Endothelial cell of umbilical vein (primary cell): ENCODE measurements at regions of chr1 and their contacts with region 1.

Region 1: GRCh38 chr1:32107742-32108661 is at the start of gene KPNA6:
- DNase-seq: peak; percentile 97
- H3K4me3 ChIP-seq: peak within 1 kb of the TSS; percentile 72 to 86 (median 81)
- H3K27ac ChIP-seq: peak within 1 kb of the TSS; percentile 66
- H3K4me1 ChIP-seq: peaks cover 4% of the 10 kb centered on the region
- H3K27me3 ChIP-seq: no peaks in the 10 kb centered on the region
- CTCF ChIP-seq: no peak
- POLR2A ChIP-seq: peak; percentile 52
- total RNA-seq, gene KPNA6: 83.4 and 85.6 TPM in 2 replicates

Region 2: DNA sequence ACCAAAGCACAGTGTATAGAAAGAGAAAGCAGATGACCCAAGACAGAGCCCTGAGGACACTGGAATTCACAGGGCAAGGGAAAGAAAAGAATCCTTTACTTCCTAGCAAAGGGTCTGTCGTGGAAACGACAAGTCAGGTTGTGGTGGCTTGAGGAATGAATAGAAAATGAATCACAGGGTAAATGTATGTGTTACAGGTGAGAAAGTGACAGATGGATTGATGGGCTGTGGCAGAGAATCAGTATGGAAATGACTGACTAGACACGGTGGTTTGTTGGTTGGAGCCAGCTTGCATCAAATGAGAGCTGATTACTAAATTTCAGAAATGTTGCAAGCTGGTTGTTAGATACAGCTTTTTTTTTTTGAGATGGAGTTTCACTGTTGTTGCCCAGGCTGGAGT is 216.7 kb before region 1 on chr1:
- CTCF ChIA-PET with region 1: no interaction called
- POLR2A ChIA-PET with region 1: no interaction called
- dilution Hi-C with region 1: no loop called
- intact Hi-C with region 1: no loop called
- DNase-seq: no peak
- H3K4me3 ChIP-seq: no peak overlapping the region
- H3K27ac ChIP-seq: no peak overlapping the region
- H3K4me1 ChIP-seq: peaks cover 9% of the 10 kb centered on the region
- H3K27me3 ChIP-seq: no peaks in the 10 kb centered on the region
- CTCF ChIP-seq: no peak
- POLR2A ChIP-seq: no peak

Region 3: GRCh38 chr1:32072622-32073298 is 35.2 kb before region 1 on chr1 and contains the start of gene TMEM39B:
- CTCF ChIA-PET with region 1: interaction called, 55 read pairs
- POLR2A ChIA-PET with region 1: interaction called, 7 read pairs
- dilution Hi-C with region 1: no loop called
- intact Hi-C with region 1: loop called (anchors 1 kb)
- DNase-seq: peak; percentile 94
- H3K4me3 ChIP-seq: peak within 1 kb of the TSS; percentile 74 to 78 (median 77)
- H3K27ac ChIP-seq: peak within 1 kb of the TSS; percentile 93
- H3K4me1 ChIP-seq: peaks cover 43% of the 10 kb centered on the region
- H3K27me3 ChIP-seq: no peaks in the 10 kb centered on the region
- CTCF ChIP-seq: no peak
- POLR2A ChIP-seq: peak; percentile 76
- total RNA-seq, gene TMEM39B: 43.7 and 47.3 TPM in 2 replicates

Region 4: DNA sequence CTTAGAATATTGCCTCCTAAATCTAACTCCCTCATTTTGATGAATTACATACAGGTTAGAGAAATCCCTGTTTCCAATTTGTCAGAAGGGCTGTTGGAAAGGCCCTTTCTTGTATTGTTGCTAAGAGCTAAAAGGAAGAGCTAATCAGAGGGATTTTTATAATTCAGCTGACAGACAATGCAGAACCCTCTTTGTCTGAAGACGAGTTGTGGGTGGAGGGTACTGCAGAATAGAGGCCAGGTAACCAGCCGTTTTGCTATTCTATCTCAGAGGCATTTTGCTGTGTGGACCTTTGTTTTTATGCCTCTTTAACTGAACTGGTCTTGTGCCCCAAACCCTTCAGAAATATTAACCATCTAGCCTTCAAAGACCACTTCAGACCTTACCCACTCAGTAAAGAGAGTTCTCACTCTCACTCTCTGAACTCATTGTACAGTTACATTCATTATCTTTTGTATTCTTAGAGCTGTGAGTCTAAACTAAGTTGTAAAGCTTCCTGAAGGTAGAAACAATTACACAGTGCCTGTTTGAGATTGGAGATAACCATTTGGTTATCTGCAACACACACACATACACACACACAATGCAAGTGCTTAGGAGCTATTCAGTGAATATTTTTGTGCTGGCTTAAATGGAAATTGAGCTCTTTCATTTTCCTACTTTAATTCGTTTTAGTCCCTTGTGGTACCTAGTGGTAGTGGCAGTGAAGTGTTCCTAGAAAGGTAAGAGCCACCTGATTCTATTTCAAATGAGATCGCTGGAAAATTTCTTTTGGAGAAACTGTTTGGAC is 19.6 kb after region 1 on chr1:
- CTCF ChIA-PET with region 1: interaction called, 13 read pairs
- POLR2A ChIA-PET with region 1: no interaction called
- dilution Hi-C with region 1: no loop called
- intact Hi-C with region 1: no loop called
- DNase-seq: peak; percentile 31
- H3K4me3 ChIP-seq: no peak overlapping the region
- H3K27ac ChIP-seq: no peak overlapping the region
- H3K4me1 ChIP-seq: peaks cover 10% of the 10 kb centered on the region
- H3K27me3 ChIP-seq: no peaks in the 10 kb centered on the region
- CTCF ChIP-seq: no peak
- POLR2A ChIP-seq: no peak

Region 5: GRCh38 chr1:32138943-32139342 is 30.9 kb after region 1 on chr1:
- CTCF ChIA-PET with region 1: interaction called, 14 read pairs
- POLR2A ChIA-PET with region 1: no interaction called
- dilution Hi-C with region 1: no loop called
- intact Hi-C with region 1: no loop called
- DNase-seq: peak; percentile 48
- H3K4me3 ChIP-seq: no peak overlapping the region
- H3K27ac ChIP-seq: peak overlapping the region; percentile 38
- H3K4me1 ChIP-seq: peaks cover 11% of the 10 kb centered on the region
- H3K27me3 ChIP-seq: no peaks in the 10 kb centered on the region
- CTCF ChIP-seq: no peak
- POLR2A ChIP-seq: no peak

Region 6: GRCh38 chr1:32151319-32151787 is 43.4 kb after region 1 on chr1:
- CTCF ChIA-PET with region 1: interaction called, 11 read pairs
- POLR2A ChIA-PET with region 1: no interaction called
- dilution Hi-C with region 1: no loop called
- intact Hi-C with region 1: no loop called
- DNase-seq: peak; percentile 16
- H3K4me3 ChIP-seq: no peak overlapping the region
- H3K27ac ChIP-seq: no peak overlapping the region
- H3K4me1 ChIP-seq: no peaks in the 10 kb centered on the region
- H3K27me3 ChIP-seq: no peaks in the 10 kb centered on the region
- CTCF ChIP-seq: no peak
- POLR2A ChIP-seq: no peak

Region 7: GRCh38 chr1:32179443-32180185 is 71.6 kb after region 1 on chr1 and contains the start of gene TXLNA:
- CTCF ChIA-PET with region 1: interaction called, 13 read pairs
- POLR2A ChIA-PET with region 1: interaction called, 9 read pairs
- dilution Hi-C with region 1: no loop called
- intact Hi-C with region 1: loop called (anchors 2 kb)
- DNase-seq: peak; percentile 94
- H3K4me3 ChIP-seq: peak within 1 kb of the TSS; percentile 53 to 90 (median 89)
- H3K27ac ChIP-seq: peak within 1 kb of the TSS; percentile 88
- H3K4me1 ChIP-seq: peaks cover 22% of the 10 kb centered on the region
- H3K27me3 ChIP-seq: no peaks in the 10 kb centered on the region
- CTCF ChIP-seq: peak in 1 of 2 donors; percentile 29
- POLR2A ChIP-seq: peak; percentile 78
- total RNA-seq, gene TXLNA: 64.3 and 69.4 TPM in 2 replicates

Region 8: GRCh38 chr1:32394141-32394889 is 286.3 kb after region 1 on chr1 and contains the start of gene BSDC1:
- CTCF ChIA-PET with region 1: no interaction called
- POLR2A ChIA-PET with region 1: no interaction called
- dilution Hi-C with region 1: no loop called
- intact Hi-C with region 1: loop called (anchors 5 kb)
- DNase-seq: peak; percentile 99
- H3K4me3 ChIP-seq: peak within 1 kb of the TSS; percentile 56 to 76 (median 65)
- H3K27ac ChIP-seq: peak within 1 kb of the TSS; percentile 60
- H3K4me1 ChIP-seq: peaks cover 15% of the 10 kb centered on the region
- H3K27me3 ChIP-seq: no peaks in the 10 kb centered on the region
- CTCF ChIP-seq: no peak
- POLR2A ChIP-seq: no peak
- total RNA-seq, gene BSDC1: 64.6 and 64.8 TPM in 2 replicates